Caco-2 (cell line): ENCODE measurements at regions of chr10 and their contacts with region 1.

Region 1: GRCh38 chr10:71319042-71319799 is at the start of gene SLC29A3:
- DNase-seq: peak; percentile 91
- H3K4me3 ChIP-seq: peak within 1 kb of the TSS; percentile 71
- H3K4me3 Mint-ChIP-seq: peak within 1 kb of the TSS; percentile 93
- H3K27ac Mint-ChIP-seq: peak within 1 kb of the TSS; percentile 56
- H3K4me1 ChIP-seq: peaks cover 22% of the 10 kb centered on the region
- H3K4me1 Mint-ChIP-seq: peaks cover 7% of the 10 kb centered on the region
- H3K27me3 ChIP-seq: no peaks in the 10 kb centered on the region
- H3K27me3 Mint-ChIP-seq: no peaks in the 10 kb centered on the region
- CTCF ChIP-seq: peak; percentile 83 to 95
- total RNA-seq, gene SLC29A3: 18.3 and 20.7 TPM in 2 replicates

Region 2: GRCh38 chr10:71246591-71247161 is 72.5 kb before region 1 on chr10:
- CTCF ChIA-PET with region 1: no interaction called
- POLR2A ChIA-PET with region 1: no interaction called
- intact Hi-C with region 1: no loop called
- DNase-seq: peak; percentile 92 to 99
- H3K4me3 ChIP-seq: no peak overlapping the region
- H3K4me3 Mint-ChIP-seq: peak overlapping the region; percentile 52
- H3K27ac Mint-ChIP-seq: peak overlapping the region; percentile 90
- H3K4me1 ChIP-seq: peaks cover 62% of the 10 kb centered on the region
- H3K4me1 Mint-ChIP-seq: peaks cover 40% of the 10 kb centered on the region
- H3K27me3 ChIP-seq: no peaks in the 10 kb centered on the region
- H3K27me3 Mint-ChIP-seq: no peaks in the 10 kb centered on the region
- CTCF ChIP-seq: no peak

Region 3: GRCh38 chr10:71264345-71265200 is 54.6 kb before region 1 on chr10:
- CTCF ChIA-PET with region 1: no interaction called
- POLR2A ChIA-PET with region 1: no interaction called
- intact Hi-C with region 1: no loop called
- DNase-seq: no peak
- H3K4me3 ChIP-seq: no peak overlapping the region
- H3K4me3 Mint-ChIP-seq: no peak overlapping the region
- H3K27ac Mint-ChIP-seq: no peak overlapping the region
- H3K4me1 ChIP-seq: 0 out of 2 replicates have a peak, but pooled peaks cover 7% of the 10 kb centered on the region
- H3K4me1 Mint-ChIP-seq: peaks cover 12% of the 10 kb centered on the region
- H3K27me3 ChIP-seq: no peaks in the 10 kb centered on the region
- H3K27me3 Mint-ChIP-seq: no peaks in the 10 kb centered on the region
- CTCF ChIP-seq: no peak

Region 4: DNA sequence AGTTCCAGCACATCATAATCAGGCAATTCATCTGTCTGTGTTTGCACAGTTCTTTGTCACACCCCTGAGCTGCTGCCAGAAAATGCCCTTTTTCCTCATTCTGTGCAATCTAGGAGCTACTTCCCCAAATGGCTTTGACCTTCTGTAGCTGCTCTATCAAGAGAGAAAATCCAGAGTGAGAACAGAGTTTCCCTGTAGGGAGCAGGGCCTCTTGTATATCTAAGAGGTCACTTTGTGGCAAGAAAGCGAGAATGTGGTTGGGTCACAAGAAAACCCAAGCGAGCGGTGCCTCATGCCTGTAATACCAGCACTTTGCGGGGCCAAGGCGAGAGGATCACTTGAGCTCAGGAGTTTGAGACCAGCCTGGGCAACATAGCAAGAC is 24.2 kb after region 1 on chr10:
- CTCF ChIA-PET with region 1: interaction called, 38 read pairs
- POLR2A ChIA-PET with region 1: interaction called, 13 read pairs
- intact Hi-C with region 1: loop called (anchors 1 kb)
- DNase-seq: peak; percentile 66 to 77
- H3K4me3 ChIP-seq: no peak overlapping the region
- H3K4me3 Mint-ChIP-seq: no peak overlapping the region
- H3K27ac Mint-ChIP-seq: peak overlapping the region; percentile 93
- H3K4me1 ChIP-seq: peaks cover 83% of the 10 kb centered on the region
- H3K4me1 Mint-ChIP-seq: peaks cover 73% of the 10 kb centered on the region
- H3K27me3 ChIP-seq: no peaks in the 10 kb centered on the region
- H3K27me3 Mint-ChIP-seq: no peaks in the 10 kb centered on the region
- CTCF ChIP-seq: no peak

Region 5: GRCh38 chr10:71378336-71379117 is 59.3 kb after region 1 on chr10:
- CTCF ChIA-PET with region 1: interaction called, 50 read pairs
- POLR2A ChIA-PET with region 1: interaction called, 11 read pairs
- intact Hi-C with region 1: loop called (anchors 1 kb)
- DNase-seq: no peak
- H3K4me3 ChIP-seq: no peak overlapping the region
- H3K4me3 Mint-ChIP-seq: no peak overlapping the region
- H3K27ac Mint-ChIP-seq: no peak overlapping the region
- H3K4me1 ChIP-seq: peaks cover 21% of the 10 kb centered on the region; the same call in 1 of the 2 replicates
- H3K4me1 Mint-ChIP-seq: peaks cover 14% of the 10 kb centered on the region
- H3K27me3 ChIP-seq: no peaks in the 10 kb centered on the region
- H3K27me3 Mint-ChIP-seq: no peaks in the 10 kb centered on the region
- CTCF ChIP-seq: no peak

Region 6: GRCh38 chr10:71462062-71462935 is 143.1 kb after region 1 on chr10:
- CTCF ChIA-PET with region 1: interaction called, 3 read pairs
- POLR2A ChIA-PET with region 1: no interaction called
- intact Hi-C with region 1: loop called (anchors 10 kb)
- DNase-seq: no peak
- H3K4me3 ChIP-seq: no peak overlapping the region
- H3K4me3 Mint-ChIP-seq: no peak overlapping the region
- H3K27ac Mint-ChIP-seq: no peak overlapping the region
- H3K4me1 ChIP-seq: no peaks in the 10 kb centered on the region
- H3K4me1 Mint-ChIP-seq: no peaks in the 10 kb centered on the region
- H3K27me3 ChIP-seq: peaks cover 3% of the 10 kb centered on the region; the same call in 1 of the 2 replicates
- H3K27me3 Mint-ChIP-seq: peaks cover 7% of the 10 kb centered on the region
- CTCF ChIP-seq: peak in 1 of 2 experiments; percentile 10

Region 7: GRCh38 chr10:71638064-71638821 is 319.0 kb after region 1 on chr10:
- CTCF ChIA-PET with region 1: interaction called, 4 read pairs
- POLR2A ChIA-PET with region 1: interaction called, 4 read pairs
- intact Hi-C with region 1: loop called (anchors 10 kb)
- DNase-seq: peak; percentile 93 to 98
- H3K4me3 ChIP-seq: peak overlapping the region; percentile 2
- H3K4me3 Mint-ChIP-seq: peak overlapping the region; percentile 65
- H3K27ac Mint-ChIP-seq: peak overlapping the region; percentile 93
- H3K4me1 ChIP-seq: peaks cover 71% of the 10 kb centered on the region
- H3K4me1 Mint-ChIP-seq: peaks cover 54% of the 10 kb centered on the region
- H3K27me3 ChIP-seq: no peaks in the 10 kb centered on the region
- H3K27me3 Mint-ChIP-seq: no peaks in the 10 kb centered on the region
- CTCF ChIP-seq: no peak